Activated T-helper 1 cell treated with anti-CD3 and anti-CD28 coated beads, Interleukin-12 subunit alpha, Interleukin-12 subunit beta, Interleukin-2, Interleukin-4 antibody, amounts not matched to agents 30 ng/mL and 10 ng/mL and 1 ng/mL, durations not matched to agents 14 hours and 24 hours and 36 hours (primary cell): ENCODE measurements at regions of chr1 and their contacts with region 1.

Region 1: DNA sequence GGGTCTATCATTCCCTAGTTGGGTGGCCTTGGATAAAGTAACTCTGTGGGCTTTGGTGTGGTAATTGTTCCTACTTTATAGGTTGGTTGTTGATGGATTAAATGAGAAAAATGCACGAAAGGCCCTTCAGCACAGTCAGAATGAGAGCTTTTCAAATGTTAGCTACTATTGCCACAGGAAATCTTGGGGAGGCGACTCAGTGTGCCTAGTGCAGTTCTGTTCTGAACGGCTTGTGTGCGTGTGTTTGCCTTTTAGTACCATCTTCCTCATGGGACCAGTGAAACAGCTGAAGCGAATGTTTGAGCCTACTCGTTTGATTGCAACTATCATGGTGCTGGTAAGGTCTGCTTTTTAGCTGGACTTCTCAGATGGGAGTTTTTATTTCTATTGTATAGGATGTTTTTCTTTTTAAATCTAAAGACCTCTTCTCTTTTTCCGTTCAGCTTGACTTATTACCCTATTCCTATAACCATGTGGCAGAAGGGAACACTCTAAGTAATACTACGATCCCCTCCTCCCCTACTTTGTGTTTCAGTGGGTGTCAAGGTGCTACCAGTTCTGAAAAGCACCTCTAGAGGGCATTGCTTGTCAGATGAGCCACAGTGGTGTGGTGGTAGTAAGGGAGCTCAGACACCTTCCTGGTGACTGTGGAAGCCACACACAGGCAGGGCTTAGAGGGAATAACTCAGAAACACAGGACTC is 9.2 kb downstream of the SFT2D2 start:
- DNase-seq: peak; percentile 39
- H3K4me3 Mint-ChIP-seq: peak overlapping the region; percentile 37
- H3K27ac Mint-ChIP-seq: peak overlapping the region; percentile 82
- H3K4me1 Mint-ChIP-seq: peaks cover 76% of the 10 kb centered on the region
- H3K27me3 Mint-ChIP-seq: no peaks in the 10 kb centered on the region

Region 2: DNA sequence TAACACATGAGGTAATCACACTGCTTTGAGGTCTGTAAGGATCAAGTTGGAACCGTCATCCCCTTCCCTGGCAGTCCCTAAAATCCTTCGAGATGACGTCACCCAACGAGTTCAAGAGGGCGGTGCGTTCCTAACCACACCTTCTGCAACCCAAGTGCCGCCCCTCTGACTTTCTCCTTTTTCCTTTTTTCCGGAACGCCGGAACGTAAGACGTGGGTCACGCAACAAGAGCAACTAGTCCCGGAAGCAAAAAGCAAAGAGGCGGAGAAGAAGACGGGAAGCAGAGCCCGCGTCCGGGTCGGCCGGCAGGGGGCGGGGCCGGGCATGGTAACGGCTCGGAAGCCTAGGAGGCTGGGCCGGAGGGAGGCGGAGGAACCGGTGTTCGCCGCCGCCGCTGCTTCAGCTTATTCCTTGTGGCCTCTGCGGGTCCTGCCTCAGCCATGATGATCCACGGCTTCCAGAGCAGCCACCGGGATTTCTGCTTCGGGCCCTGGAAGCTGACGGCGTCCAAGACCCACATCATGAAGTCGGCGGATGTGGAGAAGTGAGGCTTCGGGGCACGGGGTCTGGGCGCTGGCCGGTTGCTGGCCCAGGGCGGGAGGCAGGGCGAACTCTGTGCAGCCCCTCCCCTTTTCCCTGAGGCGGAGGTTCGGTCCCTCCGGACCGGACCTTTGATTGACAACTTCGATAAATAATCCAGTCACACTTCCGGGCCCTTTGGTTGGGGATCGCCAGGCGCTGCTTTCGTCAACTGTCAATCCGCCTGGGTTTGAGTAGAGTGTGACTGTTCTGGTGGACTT is 56.2 kb before region 1 on chr1 and contains the start of gene TIPRL:
- intact Hi-C with region 1: loop called (anchors 1 kb)
- DNase-seq: peak; percentile 95
- H3K4me3 Mint-ChIP-seq: no peak within 1 kb of the TSS
- H3K27ac Mint-ChIP-seq: no peak within 1 kb of the TSS
- H3K4me1 Mint-ChIP-seq: no peaks in the 10 kb centered on the region
- H3K27me3 Mint-ChIP-seq: no peaks in the 10 kb centered on the region
- total RNA-seq, gene TIPRL: 42.8 and 45.7 TPM in 2 replicates

Region 3: GRCh38 chr1:168312718-168313604 is 78.0 kb after region 1 on chr1:
- intact Hi-C with region 1: loop called (anchors 2 kb)
- DNase-seq: no peak
- H3K4me3 Mint-ChIP-seq: no peak overlapping the region
- H3K27ac Mint-ChIP-seq: peak overlapping the region; percentile 10
- H3K4me1 Mint-ChIP-seq: peaks cover 34% of the 10 kb centered on the region
- H3K27me3 Mint-ChIP-seq: peaks cover 2% of the 10 kb centered on the region

Region 4: DNA sequence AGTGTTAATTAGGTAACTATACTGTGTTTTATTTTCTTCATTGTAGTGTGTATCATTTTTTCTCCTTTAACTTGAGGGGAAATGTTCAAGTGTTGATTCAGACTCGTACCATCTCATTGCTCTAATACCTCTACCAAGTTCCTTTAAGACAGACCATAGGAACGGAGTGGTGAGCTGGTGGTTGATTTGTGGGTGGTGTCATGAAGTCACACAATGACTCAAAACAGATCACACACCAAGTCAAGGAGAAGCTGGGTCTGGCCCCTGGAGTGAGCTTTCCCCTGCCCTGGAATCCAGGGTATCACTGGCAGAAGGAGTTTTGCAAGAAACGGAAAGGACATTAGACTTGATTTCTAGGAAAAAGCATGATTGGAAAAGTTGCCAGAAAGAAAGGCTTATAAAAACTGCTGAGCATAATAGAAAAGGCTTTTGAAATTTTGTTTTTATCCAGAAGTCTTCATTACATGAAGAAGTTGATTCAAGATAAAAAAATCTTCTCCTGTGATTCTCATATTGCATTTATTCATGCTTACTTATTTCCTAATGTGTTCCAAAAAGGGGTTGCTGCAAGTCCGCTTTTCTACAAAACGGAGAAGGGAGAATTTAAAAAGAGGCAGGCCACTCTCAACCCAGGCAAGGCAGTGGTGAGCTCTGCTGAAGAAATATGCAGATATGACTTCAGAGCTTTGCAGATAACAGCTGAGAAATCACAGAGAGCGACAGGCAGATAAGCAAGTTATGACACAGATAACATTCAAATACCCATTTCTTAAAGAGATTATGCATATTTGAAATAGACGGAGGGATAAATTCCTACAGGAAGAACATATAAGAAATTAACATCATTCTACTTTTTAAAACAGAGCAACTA is 125.4 kb after region 1 on chr1:
- intact Hi-C with region 1: loop called (anchors 1 kb)
- DNase-seq: peak; percentile 36
- H3K4me3 Mint-ChIP-seq: peak overlapping the region; percentile 12
- H3K27ac Mint-ChIP-seq: peak overlapping the region; percentile 68
- H3K4me1 Mint-ChIP-seq: peaks cover 43% of the 10 kb centered on the region
- H3K27me3 Mint-ChIP-seq: peaks cover 3% of the 10 kb centered on the region

Region 5: DNA sequence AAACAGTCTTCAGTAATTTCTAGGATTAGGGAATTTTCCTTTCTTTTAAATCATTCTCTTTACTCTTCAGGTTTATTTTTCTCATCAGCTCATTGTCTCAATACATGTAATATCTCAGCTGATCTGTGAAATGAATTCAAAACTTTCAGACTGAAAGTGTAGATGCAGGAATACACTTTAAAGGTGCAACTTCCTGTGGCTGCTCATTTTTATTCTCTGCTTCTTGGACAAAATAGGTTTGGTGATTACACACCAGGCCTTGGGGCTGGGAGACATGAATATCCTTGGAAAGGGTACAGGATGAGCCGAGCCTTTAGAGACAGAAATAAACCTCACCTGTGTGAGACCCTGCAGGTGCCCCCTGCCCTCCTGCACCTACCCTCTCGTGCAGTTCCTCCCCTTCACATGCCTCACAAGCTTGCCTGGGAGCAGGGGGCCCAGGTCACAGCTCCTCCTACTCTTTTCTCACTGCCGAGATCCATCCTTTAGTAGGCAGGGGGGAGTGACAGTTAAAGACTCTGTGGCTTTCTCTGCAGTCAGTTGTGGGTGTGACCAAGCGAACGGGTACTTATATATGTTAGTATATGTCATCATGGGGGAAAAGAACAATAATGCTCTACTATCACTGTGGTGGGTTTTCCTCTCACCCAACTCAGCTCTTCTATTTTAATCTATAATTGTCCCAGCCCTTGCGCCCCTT is 285.2 kb after region 1 on chr1:
- intact Hi-C with region 1: loop called (anchors 5 kb)
- DNase-seq: no peak
- H3K4me3 Mint-ChIP-seq: peak overlapping the region; percentile 55
- H3K27ac Mint-ChIP-seq: peak overlapping the region; percentile 81
- H3K4me1 Mint-ChIP-seq: peaks cover 57% of the 10 kb centered on the region
- H3K27me3 Mint-ChIP-seq: no peaks in the 10 kb centered on the region

Region 6: GRCh38 chr1:169586395-169587255 is 1351.6 kb after region 1 on chr1 and contains the start of gene F5:
- intact Hi-C with region 1: loop called (anchors 5 kb)
- DNase-seq: peak; percentile 71
- H3K4me3 Mint-ChIP-seq: peak within 1 kb of the TSS; percentile 96
- H3K27ac Mint-ChIP-seq: peak within 1 kb of the TSS; percentile 91
- H3K4me1 Mint-ChIP-seq: peaks cover 81% of the 10 kb centered on the region
- H3K27me3 Mint-ChIP-seq: no peaks in the 10 kb centered on the region
- total RNA-seq, gene F5: 58.0 and 58.2 TPM in 2 replicates

Region 7: GRCh38 chr1:169794530-169795416 is 1559.8 kb after region 1 on chr1 and contains the start of gene METTL18:
- intact Hi-C with region 1: loop called (anchors 10 kb)
- DNase-seq: peak; percentile 90
- H3K4me3 Mint-ChIP-seq: peak within 1 kb of the TSS; percentile 87
- H3K27ac Mint-ChIP-seq: peak within 1 kb of the TSS; percentile 86
- H3K4me1 Mint-ChIP-seq: peaks cover 55% of the 10 kb centered on the region
- H3K27me3 Mint-ChIP-seq: no peaks in the 10 kb centered on the region
- total RNA-seq, gene METTL18: 9.0 and 9.3 TPM in 2 replicates